Right ventricle myocardium inferior (tissue), 1 donor: ENCODE measurements at regions of chr5 and their contacts with region 1.

Region 1: GRCh38 chr5:151447174-151448037 is at the start of gene SLC36A1:
- DNase-seq: peak; percentile 97
- ATAC-seq: peak; percentile 96
- total RNA-seq, gene SLC36A1: 5.2 TPM

Region 2: GRCh38 chr5:151477101-151477500 is 29.7 kb after region 1 on chr5:
- intact Hi-C with region 1: no loop called
- DNase-seq: no peak
- ATAC-seq: no peak

Region 3: GRCh38 chr5:151487544-151487943 is 40.1 kb after region 1 on chr5:
- intact Hi-C with region 1: no loop called
- DNase-seq: no peak
- ATAC-seq: no peak

Region 4: DNA sequence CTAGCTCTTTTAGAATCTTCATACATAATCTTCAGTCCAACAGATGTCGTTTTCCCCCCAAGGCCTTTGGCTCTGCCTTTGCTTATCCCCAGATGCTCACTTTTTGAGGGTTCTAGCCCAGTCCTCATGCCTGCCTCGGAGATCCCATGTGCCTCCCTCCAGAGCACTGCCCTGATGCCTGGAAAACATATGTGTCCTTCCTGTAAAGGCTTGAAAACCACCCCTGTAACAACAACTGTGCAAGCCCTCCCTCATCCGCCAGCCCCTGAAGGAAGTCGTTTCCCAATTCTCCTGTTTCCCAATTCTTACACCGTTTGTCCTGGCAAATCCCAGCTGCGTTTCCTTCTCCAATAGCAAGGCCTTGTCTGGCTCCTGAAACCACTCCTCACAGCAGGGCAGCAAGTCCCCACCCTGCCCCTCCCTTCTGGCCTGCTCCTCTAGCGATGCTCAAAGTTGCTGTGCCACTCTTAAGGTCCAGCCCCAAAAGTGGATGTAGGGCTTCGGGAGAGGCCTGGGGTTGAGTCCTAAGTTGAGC is 52.2 kb after region 1 on chr5:
- intact Hi-C with region 1: loop called (anchors 1 kb)
- DNase-seq: no peak
- ATAC-seq: no peak

Region 5: GRCh38 chr5:151651997-151652645 is 204.7 kb after region 1 on chr5:
- intact Hi-C with region 1: loop called (anchors 2 kb)
- DNase-seq: no peak
- ATAC-seq: peak; percentile 89

Region 6: DNA sequence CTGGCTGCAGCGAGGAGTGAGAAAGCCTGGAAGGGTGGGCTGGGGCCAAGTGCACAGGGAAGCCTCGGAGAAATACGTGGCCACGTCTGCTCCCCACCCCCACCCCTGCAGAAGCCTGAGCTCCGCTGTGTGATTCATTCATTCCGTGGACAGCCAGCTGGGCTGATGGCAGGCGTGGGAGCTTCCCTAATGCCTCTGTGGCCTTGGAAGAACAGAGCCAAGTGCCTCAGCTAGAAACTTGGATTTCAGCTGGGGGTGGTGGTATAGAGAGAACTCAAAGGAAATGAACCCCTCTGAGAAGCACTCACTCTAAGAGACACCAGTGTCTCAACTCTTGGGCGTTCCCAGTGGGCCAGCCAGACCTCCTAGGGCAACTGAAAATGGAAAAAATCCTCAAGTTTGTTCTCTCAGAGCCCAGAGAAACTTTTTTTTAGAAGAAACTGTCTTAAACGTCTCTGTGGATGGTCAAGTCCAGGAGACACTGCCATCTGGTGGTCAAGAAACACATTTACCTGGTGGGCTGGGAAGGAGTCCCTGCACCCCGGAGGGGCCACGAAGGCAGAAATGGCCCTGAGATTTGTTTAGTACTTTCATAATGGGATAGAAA is 293.0 kb after region 1 on chr5:
- intact Hi-C with region 1: loop called (anchors 2 kb)
- DNase-seq: peak; percentile 76
- ATAC-seq: peak; percentile 79